ENCODE measurements at regions of chr10 and their contacts with region 1.

Region 1: GRCh38 chr10:49151025-49151445 is 17.2 kb upstream of the FAM170B start:
- DNase-seq: no peak
- ATAC-seq: no peak

Region 2: DNA sequence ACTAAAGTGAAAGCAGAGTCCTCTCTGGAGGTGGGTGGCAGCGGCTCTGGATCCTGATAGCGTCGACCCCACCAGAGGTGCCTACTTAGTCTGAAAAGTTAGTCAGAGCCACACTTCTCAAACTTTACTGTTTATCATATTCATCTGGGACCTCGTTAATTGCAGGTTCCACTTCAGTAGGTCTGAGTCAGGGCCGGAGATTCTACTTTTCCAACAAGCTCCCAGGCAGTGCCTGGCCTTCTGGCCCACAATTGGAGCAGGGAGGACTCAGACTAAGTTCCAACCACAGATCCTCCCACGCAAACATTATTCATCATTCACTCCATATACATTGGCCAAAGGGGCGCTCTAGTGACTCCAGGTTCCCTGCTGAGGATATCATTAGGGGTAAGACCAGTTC is 113.8 kb before region 1 on chr10:
- intact Hi-C with region 1: no loop called
- DNase-seq: no peak
- ATAC-seq: no peak

Region 3: GRCh38 chr10:49177391-49178355 is 26.6 kb after region 1 on chr10:
- intact Hi-C with region 1: loop called (anchors 2 kb)
- DNase-seq: peak; percentile 66
- ATAC-seq: peak; percentile 88

Region 4: DNA sequence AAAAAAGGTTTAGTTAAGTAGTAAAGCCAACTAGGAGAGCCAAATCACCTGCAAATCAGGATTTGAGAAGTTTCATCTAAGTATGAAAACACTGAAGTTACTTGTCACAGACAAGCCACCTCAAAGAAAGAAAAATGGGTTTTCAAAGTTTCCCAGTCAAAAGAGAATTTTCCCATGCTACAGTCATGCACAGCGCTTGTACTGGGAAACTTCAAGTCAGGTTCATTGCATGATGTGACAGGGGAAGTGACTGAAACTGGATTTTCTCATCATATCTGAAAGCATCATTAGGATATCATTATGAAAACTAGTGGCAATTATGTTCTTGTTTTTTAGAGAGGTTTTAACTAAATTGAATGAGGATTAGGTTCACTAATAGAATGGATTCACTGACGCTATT is 1305.7 kb after region 1 on chr10:
- intact Hi-C with region 1: no loop called
- DNase-seq: no peak
- ATAC-seq: no peak